A549 (cell line): ENCODE measurements at regions of chr11 and their contacts with region 1.

Region 1: GRCh38 chr11:34926101-34926830 is 9.8 kb downstream of the PDHX start:
- DNase-seq: peak in 1 of 2 experiments; percentile 53
- ATAC-seq: peak; percentile 54 to 66; a peak in 3 of 6 replicates
- H3K4me3 ChIP-seq: no peak overlapping the region
- H3K27ac ChIP-seq: peak overlapping the region in 1 of 2 experiments; percentile 3; a peak in 1 of 6 replicates
- H3K4me1 ChIP-seq: peaks cover 52% of the 10 kb centered on the region
- CTCF ChIP-seq: peak; percentile 92
- EP300 ChIP-seq: no peak
- POLR2A ChIP-seq: no peak
- RAD21 ChIP-seq: peak; percentile 93 to 94

Region 2: GRCh38 chr11:34480314-34480713 is 446.0 kb before region 1 on chr11:
- CTCF ChIA-PET with region 1: no interaction called
- POLR2A ChIA-PET with region 1: no interaction called
- DNase-seq: no peak
- ATAC-seq: no peak
- H3K4me3 ChIP-seq: no peak overlapping the region
- H3K27ac ChIP-seq: no peak overlapping the region
- H3K4me1 ChIP-seq: no peaks in the 10 kb centered on the region
- CTCF ChIP-seq: no peak
- EP300 ChIP-seq: no peak
- POLR2A ChIP-seq: no peak
- RAD21 ChIP-seq: no peak

Region 3: DNA sequence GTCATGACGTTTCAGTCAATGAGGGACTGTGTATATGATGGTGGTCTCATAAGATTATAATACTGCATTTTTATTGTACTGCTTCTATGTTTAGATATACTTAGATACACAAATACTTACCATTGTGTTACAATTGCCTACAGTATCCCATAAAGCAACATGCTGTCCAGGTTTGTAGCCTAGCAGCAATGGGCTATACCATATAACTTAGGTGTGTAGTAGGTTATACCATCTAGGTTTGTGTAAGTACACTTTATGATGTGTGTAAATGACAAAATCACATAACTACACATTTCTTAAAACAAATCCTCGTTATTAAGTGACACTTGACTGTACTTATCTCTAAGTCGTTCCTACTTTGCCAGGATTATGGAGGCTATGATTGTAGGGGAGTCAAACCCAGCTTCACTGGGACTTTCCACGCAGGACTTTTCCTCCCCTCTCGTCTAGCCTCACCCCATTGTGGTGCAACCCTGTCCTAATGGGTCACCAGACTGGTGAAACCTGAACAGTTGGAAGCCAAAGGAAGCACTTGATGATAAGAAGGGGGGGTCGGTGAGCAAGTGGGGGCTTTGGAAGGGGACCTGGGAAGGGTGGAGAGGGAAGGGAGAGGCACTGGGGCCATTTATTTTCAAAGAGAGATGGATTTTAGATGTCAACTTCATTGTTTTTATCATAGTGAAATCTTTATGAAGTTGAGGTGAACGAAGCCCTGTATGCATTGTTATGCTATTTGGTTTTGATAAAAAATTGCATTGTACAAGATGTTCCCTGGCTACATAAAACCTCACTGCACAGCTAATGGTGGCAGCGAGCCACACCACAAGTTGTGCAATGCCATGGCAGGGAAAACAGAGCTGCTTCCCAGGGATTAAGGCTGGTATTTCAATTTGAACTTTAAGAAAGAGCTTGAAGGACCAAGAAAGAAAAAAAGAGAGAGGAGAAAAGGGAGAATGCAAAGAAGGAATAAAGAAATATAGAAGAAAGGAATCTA is 176.3 kb before region 1 on chr11:
- CTCF ChIA-PET with region 1: no interaction called
- POLR2A ChIA-PET with region 1: no interaction called
- DNase-seq: no peak
- ATAC-seq: no peak
- H3K4me3 ChIP-seq: no peak overlapping the region
- H3K27ac ChIP-seq: peak overlapping the region; percentile 49 to 60; a peak in 4 of 6 replicates
- H3K4me1 ChIP-seq: no peaks in the 10 kb centered on the region; the same call in 2 of the 3 replicates
- CTCF ChIP-seq: no peak
- EP300 ChIP-seq: no peak
- POLR2A ChIP-seq: no peak
- RAD21 ChIP-seq: no peak

Region 4: DNA sequence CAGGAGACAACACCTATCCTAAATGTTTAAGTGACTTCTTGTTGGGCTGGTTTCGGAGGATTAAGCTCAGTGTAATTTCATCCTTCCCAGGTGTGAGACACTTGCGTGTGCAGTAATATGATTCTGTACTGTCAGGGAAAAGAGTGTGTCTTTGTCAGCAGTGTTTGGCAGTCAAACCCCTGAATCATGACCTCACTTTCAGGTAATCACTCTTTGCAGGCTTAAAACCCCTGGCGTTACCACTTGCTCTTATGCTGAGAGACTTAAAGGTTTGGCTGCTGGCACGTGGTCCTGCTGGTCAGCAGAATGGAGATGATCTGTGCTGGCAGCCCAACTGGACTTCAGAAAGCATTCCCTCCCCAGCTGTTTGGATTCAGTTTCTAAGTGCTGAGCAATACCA is 66.2 kb before region 1 on chr11:
- CTCF ChIA-PET with region 1: no interaction called
- POLR2A ChIA-PET with region 1: no interaction called
- DNase-seq: no peak
- ATAC-seq: no peak
- H3K4me3 ChIP-seq: no peak overlapping the region
- H3K27ac ChIP-seq: no peak overlapping the region
- H3K4me1 ChIP-seq: no peaks in the 10 kb centered on the region; the same call in 2 of the 3 replicates
- CTCF ChIP-seq: no peak
- EP300 ChIP-seq: no peak
- POLR2A ChIP-seq: no peak
- RAD21 ChIP-seq: no peak

Region 5: DNA sequence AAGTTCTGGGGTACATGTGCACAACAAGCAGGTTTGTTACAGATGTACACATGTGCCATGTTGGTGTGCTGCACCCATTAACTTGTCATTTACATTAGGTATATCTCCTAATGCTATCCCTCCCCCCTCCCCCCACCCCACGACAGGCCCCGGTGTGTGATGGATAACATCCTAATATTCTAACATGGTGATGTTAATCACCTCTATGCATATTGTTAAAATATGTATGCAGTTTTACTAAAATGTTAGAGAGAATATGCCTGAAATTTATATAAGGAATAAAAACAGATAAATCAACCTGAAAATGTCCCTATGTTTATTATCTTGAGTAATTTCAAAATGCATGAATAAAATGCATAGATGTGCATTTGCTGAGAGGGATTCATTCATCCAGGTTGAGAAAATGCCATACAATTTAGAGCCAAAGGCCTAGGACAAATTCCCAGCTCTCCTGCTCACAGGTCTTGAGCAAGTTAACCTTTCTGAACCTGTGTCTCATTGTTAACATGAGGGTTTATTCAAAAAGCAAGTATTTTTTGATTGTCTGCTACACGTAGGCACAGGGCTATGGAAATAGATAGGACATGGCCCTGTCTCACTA is 48.8 kb before region 1 on chr11:
- CTCF ChIA-PET with region 1: no interaction called
- POLR2A ChIA-PET with region 1: no interaction called
- DNase-seq: no peak
- ATAC-seq: no peak
- H3K4me3 ChIP-seq: no peak overlapping the region
- H3K27ac ChIP-seq: no peak overlapping the region
- H3K4me1 ChIP-seq: no peaks in the 10 kb centered on the region
- CTCF ChIP-seq: no peak
- EP300 ChIP-seq: no peak
- POLR2A ChIP-seq: no peak
- RAD21 ChIP-seq: no peak

Region 6: GRCh38 chr11:34916015-34916842 is 10.0 kb before region 1 on chr11 and contains the starts of genes APIP and PDHX:
- CTCF ChIA-PET with region 1: interaction called, 11 read pairs
- POLR2A ChIA-PET with region 1: interaction called, 5 read pairs
- DNase-seq: peak; percentile 90 to 99
- ATAC-seq: peak; percentile 92 to 96
- H3K4me3 ChIP-seq: peak within 1 kb of the TSS; percentile 78
- H3K27ac ChIP-seq: peak within 1 kb of the TSS; percentile 92 to 98
- H3K4me1 ChIP-seq: peaks cover 20% of the 10 kb centered on the region
- CTCF ChIP-seq: no peak
- EP300 ChIP-seq: no peak
- POLR2A ChIP-seq: peak; percentile 97
- RAD21 ChIP-seq: no peak
- polyA plus RNA-seq, gene APIP: 35.1 and 55.6 TPM in 2 replicates
- polyA plus RNA-seq, gene PDHX: 51.4 and 87.4 TPM in 2 replicates

Region 7: GRCh38 chr11:34940026-34940677 is 13.9 kb after region 1 on chr11:
- CTCF ChIA-PET with region 1: interaction called, 10 read pairs
- POLR2A ChIA-PET with region 1: no interaction called
- DNase-seq: no peak
- ATAC-seq: no peak
- H3K4me3 ChIP-seq: no peak overlapping the region
- H3K27ac ChIP-seq: no peak overlapping the region
- H3K4me1 ChIP-seq: no peaks in the 10 kb centered on the region
- CTCF ChIP-seq: peak; percentile 20; the same call in 1 of the 3 replicates
- EP300 ChIP-seq: no peak
- POLR2A ChIP-seq: no peak
- RAD21 ChIP-seq: peak; percentile 27 to 32; a peak in 2 of 5 replicates

Region 8: DNA sequence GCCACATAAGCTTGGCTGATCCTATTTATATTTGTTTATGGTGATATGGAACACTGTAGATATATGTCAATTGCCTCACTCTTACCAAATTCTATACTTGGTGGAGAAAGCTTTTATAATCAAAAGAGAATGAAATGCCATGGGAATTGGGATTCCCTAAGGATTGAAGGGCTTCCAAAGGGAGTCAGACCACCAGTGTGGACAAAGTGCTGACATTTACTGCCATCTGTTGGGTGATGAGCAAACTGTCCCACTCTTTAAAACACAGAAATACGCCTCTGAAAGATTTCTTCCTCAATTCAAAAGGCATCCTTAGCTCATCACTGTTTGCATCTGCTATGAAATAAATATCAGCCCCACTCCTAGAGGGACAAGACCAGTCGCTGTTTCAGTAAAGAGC is 486.0 kb after region 1 on chr11:
- CTCF ChIA-PET with region 1: interaction called, 28 read pairs
- POLR2A ChIA-PET with region 1: no interaction called
- DNase-seq: peak; percentile 25 to 43
- ATAC-seq: peak; percentile 65 to 82; a peak in 5 of 6 replicates
- H3K4me3 ChIP-seq: no peak overlapping the region
- H3K27ac ChIP-seq: no peak overlapping the region
- H3K4me1 ChIP-seq: no peaks in the 10 kb centered on the region
- CTCF ChIP-seq: peak; percentile 72
- EP300 ChIP-seq: no peak
- POLR2A ChIP-seq: no peak
- RAD21 ChIP-seq: peak; percentile 72 to 74